ENCODE measurements at regions of chr3 and their contacts with region 1.

Region 1: DNA sequence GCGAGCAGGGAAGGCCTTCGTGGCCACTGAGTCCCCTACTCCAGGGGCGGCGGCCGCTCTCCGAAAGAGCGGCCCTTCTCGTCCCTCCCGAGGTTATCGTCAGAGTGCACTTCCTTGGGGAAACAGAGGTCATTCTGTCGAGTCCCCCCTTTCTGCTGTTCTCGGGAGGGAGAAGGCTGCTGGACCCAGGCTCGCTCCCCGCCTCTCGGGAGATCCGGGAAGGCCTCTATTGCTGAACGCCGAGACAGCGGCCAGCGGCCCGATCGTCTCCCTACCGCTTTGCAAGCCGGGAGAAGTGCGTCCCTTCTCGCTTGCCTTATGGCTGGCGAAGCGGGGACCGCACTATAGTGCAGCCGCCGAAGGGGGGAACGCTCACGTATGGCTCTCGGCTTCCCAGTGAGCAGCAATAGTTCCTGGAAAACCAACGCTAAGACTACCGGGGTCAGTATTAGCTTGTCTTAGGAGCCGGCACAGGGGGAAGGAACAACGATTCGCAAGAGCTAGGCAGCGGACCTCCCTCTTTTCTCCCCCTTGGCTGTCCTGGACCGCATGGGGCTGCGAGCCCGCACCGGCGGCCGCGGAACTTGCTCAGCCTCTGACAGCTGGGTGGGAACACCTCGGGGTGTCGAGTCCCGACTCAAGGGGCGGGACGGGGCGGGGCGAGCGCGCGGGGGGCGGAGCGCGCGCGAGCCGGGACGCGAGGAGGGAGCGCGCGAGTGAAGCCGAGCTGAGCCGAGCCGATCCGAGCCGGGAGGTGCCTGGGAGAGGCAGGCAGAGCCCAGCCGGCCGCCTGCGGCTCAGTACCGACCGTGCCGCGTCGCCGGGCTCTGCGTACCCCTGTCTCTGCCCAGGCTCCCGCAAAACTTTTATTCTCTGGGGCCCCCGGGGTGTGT is 930 bp upstream of the PPM1L start:
- DNase-seq: peak; percentile 91 to 93
- ATAC-seq: peak; percentile 65 to 79
- H3K4me3 ChIP-seq: peak overlapping the region; percentile 82 to 97 (median 89)
- H3K27ac ChIP-seq: peak overlapping the region; percentile 94 to 99 (median 96)
- H3K4me1 ChIP-seq: peaks cover 20 to 25% of the 10 kb centered on the region in 2 donors
- H3K27me3 ChIP-seq: no peaks in the 10 kb centered on the region
- CTCF ChIP-seq: peak in 3 of 5 experiments; percentile 7 to 30 (median 19)
- POLR2A ChIP-seq: peak; percentile 92 to 98

Region 2: DNA sequence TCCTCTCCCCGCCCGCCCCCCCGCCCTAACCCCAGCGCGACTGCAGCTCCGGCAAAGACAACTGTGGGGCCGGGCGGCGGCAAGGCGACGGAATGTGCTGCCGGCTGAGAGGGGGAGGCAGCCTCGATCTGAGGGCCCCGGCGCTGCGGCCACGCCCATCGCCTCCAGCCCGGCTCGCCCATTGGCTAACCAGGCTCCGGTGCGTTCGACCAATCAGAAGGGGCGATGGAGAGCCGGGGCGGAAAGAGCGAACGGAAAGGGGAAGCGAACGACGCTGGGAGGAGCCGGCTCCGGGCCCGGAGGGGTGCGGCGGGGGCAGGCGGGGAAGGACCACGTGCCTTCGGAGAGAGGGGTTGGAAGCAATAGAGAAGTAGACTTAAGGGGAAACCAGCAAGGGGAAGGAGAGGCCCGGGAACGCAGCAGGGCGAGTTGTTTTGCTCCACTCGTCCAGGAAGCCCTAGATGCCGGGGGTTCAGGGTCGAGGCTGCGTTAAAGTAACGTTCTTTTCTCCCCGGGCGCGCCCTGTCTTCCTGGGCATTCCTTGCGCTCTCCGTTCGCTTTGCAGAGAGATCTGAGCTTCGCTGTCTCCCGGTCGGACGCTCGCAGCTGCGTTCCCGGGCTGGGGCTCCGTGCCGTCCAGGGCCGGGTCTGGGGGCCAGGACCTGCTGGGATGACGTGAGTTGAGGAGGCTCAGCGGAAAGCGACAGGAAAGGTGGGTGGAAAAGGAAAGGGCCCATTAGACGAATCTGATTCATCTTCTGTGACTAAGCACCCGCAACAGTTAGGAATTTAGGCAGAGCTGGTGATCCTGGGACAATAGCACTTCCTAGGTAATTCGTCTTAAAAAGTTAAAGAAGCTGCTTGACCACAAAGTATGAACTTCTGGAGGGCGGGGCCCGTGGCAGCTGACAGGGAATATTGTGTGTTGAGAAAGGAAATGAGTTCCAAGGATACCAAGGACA is 189.4 kb before region 1 on chr3 and contains the start of gene KPNA4:
- in situ Hi-C with region 1: loop called in 2 of 4 experiments (anchors 10 kb)
- intact Hi-C with region 1: loop called (anchors 5 kb)
- DNase-seq: peak; percentile 98
- ATAC-seq: peak; percentile 89 to 92
- H3K4me3 ChIP-seq: peak within 1 kb of the TSS; percentile 84 to 99 (median 94)
- H3K27ac ChIP-seq: peak within 1 kb of the TSS; percentile 97 to 100 (median 98)
- H3K4me1 ChIP-seq: peaks cover 52 to 56% of the 10 kb centered on the region in 2 donors
- H3K27me3 ChIP-seq: no peaks in the 10 kb centered on the region
- CTCF ChIP-seq: no peak
- POLR2A ChIP-seq: peak; percentile 81 to 92
- total RNA-seq, gene KPNA4: 78.9 to 126 (median 86.0) TPM

Region 3: DNA sequence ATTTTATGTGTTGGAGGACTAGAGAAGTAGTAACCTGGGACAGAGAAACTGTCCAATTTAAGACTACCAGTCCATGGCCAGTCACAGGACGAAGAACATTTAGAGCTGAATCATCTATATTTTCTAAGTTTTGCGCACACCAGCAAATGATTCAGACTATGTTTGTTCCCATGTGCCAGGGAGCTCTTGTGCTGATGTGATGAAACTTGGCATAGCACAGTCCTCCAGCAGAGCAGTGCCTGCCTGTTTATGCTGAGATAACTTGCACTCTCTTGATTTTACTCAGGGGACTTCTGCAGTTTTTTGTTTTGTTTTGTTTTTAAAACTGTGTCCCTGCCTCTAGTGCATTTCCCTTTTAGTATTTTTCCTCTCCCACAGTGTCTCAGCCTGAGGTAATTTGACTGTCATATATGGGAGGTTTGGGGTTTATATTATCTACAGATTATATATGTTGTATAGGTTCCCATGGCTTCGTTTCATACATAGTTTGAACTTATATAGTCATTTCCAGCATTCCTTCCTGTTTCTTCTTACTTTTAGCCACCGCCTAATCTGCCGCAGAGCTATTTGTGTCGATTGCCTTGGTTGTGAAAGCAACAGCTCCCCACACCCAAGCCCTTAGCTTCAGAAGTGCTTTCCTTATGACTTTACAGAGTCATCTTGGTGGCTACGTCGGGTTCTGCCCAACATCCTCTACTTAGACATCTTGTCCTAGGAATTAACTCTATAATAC is 46.5 kb after region 1 on chr3:
- in situ Hi-C with region 1: loop called in 1 of 4 experiments (anchors 10 kb)
- intact Hi-C with region 1: loop called (anchors 5 kb)
- DNase-seq: peak; percentile 83 to 85
- ATAC-seq: peak; percentile 83 to 84
- H3K4me3 ChIP-seq: peak overlapping the region; percentile 27 to 53 (median 39)
- H3K27ac ChIP-seq: peak overlapping the region; percentile 91 to 94 (median 92)
- H3K4me1 ChIP-seq: peaks cover 89 to 92% of the 10 kb centered on the region in 2 donors
- H3K27me3 ChIP-seq: no peaks in the 10 kb centered on the region
- CTCF ChIP-seq: no peak
- POLR2A ChIP-seq: peak; percentile 34 to 63

Region 4: GRCh38 chr3:160869818-160870217 is 114.7 kb after region 1 on chr3:
- in situ Hi-C with region 1: no loop called
- intact Hi-C with region 1: loop called (anchors 1 kb)
- DNase-seq: peak; percentile 92 to 93
- ATAC-seq: peak; percentile 94 to 95
- H3K4me3 ChIP-seq: peak overlapping the region; percentile 41 to 50 (median 46)
- H3K27ac ChIP-seq: peak overlapping the region; percentile 89 to 92 (median 91)
- H3K4me1 ChIP-seq: peaks cover 76 to 77% of the 10 kb centered on the region in 2 donors
- H3K27me3 ChIP-seq: no peaks in the 10 kb centered on the region
- CTCF ChIP-seq: no peak
- POLR2A ChIP-seq: peak in 1 of 2 donors; percentile 11

Region 5: DNA sequence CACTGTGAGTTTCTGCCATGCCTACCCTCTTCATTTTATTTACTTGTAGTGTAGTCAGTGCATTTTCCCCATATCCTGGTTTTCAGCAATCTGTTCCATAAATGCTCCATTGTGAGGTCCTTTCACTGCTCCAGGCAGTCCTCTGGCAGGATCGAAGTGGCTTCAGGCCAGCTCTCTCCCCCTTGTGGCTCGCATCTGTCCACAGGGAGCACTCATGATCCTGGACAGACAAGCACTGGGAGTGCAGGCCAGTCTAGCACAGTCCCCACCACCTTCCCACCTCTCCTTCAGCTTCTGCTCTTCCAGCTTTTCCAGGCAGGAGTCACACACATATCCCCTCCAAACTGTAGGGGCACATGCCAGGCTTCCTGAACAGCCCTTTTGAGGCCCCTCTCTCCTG is 174.5 kb after region 1 on chr3:
- in situ Hi-C with region 1: no loop called
- intact Hi-C with region 1: loop called (anchors 2 kb)
- DNase-seq: peak; percentile 32 to 43
- ATAC-seq: peak; percentile 59 to 68
- H3K4me3 ChIP-seq: no peak overlapping the region
- H3K27ac ChIP-seq: no peak overlapping the region
- H3K4me1 ChIP-seq: peaks cover 17 to 50% of the 10 kb centered on the region in 2 donors
- H3K27me3 ChIP-seq: no peaks in the 10 kb centered on the region
- CTCF ChIP-seq: peak in 4 of 5 experiments; percentile 20 to 48 (median 36)
- POLR2A ChIP-seq: no peak

Region 6: DNA sequence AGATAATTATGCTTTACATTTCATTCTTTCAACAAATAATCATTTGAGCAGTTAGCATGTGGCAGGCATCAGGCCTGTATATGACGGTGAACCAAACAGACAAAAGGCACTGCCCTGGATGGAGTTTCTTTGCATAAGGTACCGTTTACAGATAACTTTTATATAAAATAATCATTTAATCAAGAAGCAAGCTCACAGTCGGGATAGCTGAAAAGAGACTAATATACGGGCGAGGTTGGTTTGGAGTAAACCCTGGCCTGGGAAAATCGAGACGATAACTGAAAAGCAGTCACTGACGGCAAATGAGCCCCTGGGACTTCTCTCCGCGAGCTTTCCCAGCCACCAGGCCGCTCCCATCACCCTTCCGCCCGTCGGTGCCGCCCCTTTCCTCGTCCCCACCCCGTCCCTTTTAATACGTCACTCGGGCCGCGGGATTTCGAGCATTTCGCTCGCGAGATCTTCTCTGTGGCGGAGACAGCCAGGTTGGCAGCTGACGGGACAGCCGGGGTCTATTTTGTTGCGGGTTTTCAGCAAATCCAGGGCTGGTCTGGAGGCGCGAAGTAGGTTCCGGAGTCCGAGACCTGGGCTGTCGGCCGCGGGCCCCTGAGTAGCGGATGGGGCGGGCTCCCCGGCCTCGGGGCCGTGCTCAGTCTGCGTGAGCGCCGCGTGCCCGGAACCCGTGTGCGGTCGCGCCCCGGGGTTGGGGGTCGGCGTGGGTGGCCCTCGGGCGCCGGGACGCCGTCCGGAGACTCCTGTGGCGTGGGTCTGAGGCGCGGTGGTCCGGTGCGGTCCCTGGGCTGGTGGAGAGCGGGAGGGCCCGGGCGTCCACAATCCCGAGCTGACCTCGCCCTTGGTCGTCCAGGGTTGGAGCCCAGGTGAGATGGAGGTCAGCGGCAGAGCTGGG is 466.0 kb after region 1 on chr3 and contains the start of gene NMD3:
- in situ Hi-C with region 1: no loop called
- intact Hi-C with region 1: loop called (anchors 1 kb)
- DNase-seq: peak; percentile 90 to 91
- ATAC-seq: peak; percentile 98 to 99
- H3K4me3 ChIP-seq: peak within 1 kb of the TSS; percentile 84 to 95 (median 90)
- H3K27ac ChIP-seq: peak within 1 kb of the TSS; percentile 92 to 95 (median 94)
- H3K4me1 ChIP-seq: peaks cover 19 to 29% of the 10 kb centered on the region in 2 donors
- H3K27me3 ChIP-seq: no peaks in the 10 kb centered on the region
- CTCF ChIP-seq: no peak
- POLR2A ChIP-seq: peak; percentile 83 to 87
- total RNA-seq, gene NMD3: 27.3 to 42.8 (median 37.4) TPM